ENCODE measurements at regions of chr16 and their contacts with region 1.

Region 1: GRCh38 chr16:4506450-4506849 is 30.3 kb downstream of the HMOX2 start:
- DNase-seq: peak; percentile 71
- H3K4me3 Mint-ChIP-seq: peak overlapping the region; percentile 52
- H3K27ac Mint-ChIP-seq: peak overlapping the region; percentile 93
- H3K4me1 Mint-ChIP-seq: peaks cover 58% of the 10 kb centered on the region
- H3K27me3 Mint-ChIP-seq: no peaks in the 10 kb centered on the region

Region 2: GRCh38 chr16:4416200-4417032 is 90.0 kb before region 1 on chr16 and contains the start of gene CORO7:
- CTCF ChIA-PET with region 1: interaction called, 3 read pairs
- POLR2A ChIA-PET with region 1: interaction called, 40 read pairs
- DNase-seq: peak; percentile 98
- H3K4me3 Mint-ChIP-seq: peak within 1 kb of the TSS; percentile 95
- H3K27ac Mint-ChIP-seq: peak within 1 kb of the TSS; percentile 99
- H3K4me1 Mint-ChIP-seq: peaks cover 47% of the 10 kb centered on the region
- H3K27me3 Mint-ChIP-seq: peaks cover 4% of the 10 kb centered on the region
- total RNA-seq, gene CORO7: 244 to 245 TPM

Region 3: DNA sequence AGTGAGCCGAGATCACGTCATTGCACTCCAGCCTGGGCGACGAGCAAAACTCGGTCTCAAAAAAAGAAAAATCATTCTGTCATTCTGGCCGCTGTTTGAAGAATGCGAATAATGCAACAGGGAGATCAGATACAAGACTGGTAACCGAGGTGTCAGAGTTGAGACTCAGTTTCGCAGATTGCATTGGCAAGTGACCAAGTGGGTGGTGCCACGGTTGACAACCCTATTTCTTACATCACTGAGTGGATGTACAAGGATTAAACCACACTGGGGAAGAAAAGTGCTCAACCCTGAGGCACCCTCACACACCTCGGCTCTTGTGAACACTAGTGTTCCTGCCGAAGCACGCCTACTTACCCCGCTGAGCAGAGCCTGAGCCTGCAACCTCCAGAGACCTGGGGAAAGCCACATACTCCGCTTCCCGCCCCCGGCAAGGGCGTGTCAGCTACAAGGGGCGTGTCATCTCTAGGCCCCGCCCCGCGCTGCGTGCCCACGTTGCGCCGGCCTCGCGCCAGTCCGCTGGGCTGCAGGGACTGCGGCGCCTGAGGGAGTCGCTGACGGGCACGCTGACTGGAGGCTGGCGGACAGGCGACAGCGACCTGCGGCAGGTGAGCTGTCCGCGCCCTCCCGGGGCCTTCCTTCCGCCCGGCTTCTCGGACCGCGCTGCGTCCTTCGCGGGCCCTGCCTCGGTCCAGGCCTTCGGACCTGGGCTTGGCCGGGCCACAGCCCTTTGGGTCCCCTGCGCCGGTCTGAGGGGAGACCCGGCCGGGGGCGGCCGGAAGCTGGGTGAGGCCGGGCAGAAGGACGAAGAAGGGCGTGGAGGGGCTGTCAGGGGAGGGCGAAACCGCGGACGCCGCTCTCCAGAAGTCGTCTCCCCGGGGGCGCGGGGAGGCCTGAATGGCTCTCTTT is 30.3 kb before region 1 on chr16 and contains the start of gene HMOX2:
- CTCF ChIA-PET with region 1: interaction called, 102 read pairs
- POLR2A ChIA-PET with region 1: interaction called, 154 read pairs
- DNase-seq: peak; percentile 96
- H3K4me3 Mint-ChIP-seq: peak within 1 kb of the TSS; percentile 91
- H3K27ac Mint-ChIP-seq: peak within 1 kb of the TSS; percentile 93
- H3K4me1 Mint-ChIP-seq: peaks cover 43% of the 10 kb centered on the region
- H3K27me3 Mint-ChIP-seq: no peaks in the 10 kb centered on the region
- total RNA-seq, gene HMOX2: 77.4 to 83.4 TPM

Region 4: DNA sequence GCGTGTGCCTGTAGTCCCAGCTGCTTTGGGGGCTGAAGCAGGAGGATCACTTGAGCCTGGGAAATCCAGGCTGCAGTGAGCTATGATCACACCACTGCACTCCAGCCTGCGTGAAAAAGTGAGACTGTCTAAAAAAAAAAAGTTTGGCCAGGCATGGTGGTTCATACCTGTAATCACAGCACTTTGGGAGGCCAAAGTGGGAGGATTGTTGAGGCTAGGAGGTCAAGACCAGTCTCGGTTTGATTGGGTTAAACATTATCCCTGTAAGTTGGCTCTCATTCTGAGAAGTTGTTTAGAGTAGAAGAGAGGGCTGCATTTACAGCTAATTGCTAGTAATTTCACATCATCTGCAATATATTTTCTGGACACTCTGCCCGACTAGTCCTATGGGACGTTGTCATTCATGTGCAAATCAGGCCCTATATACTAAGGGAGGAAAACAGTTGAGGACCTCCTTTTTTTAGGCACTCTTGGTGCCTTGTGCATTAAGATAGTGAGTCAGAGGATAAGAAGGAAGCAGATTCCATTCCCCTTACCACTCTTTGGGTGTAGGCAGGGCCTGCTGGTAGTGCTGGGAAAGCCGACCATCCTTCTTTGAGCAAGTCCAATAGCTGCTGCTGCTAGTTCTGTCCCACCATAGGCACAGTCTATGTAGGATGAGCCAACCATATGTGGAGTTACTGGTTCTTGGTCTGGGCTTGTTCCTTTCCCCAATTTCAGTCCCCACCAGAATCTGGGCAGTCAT is 11.5 kb before region 1 on chr16:
- CTCF ChIA-PET with region 1: interaction called, 19 read pairs
- POLR2A ChIA-PET with region 1: interaction called, 19 read pairs
- DNase-seq: no peak
- H3K4me3 Mint-ChIP-seq: no peak overlapping the region
- H3K27ac Mint-ChIP-seq: no peak overlapping the region
- H3K4me1 Mint-ChIP-seq: peaks cover 55% of the 10 kb centered on the region
- H3K27me3 Mint-ChIP-seq: no peaks in the 10 kb centered on the region

Region 5: GRCh38 chr16:4538350-4539235 is 32.1 kb after region 1 on chr16 and contains the start of gene CDIP1:
- CTCF ChIA-PET with region 1: interaction called, 11 read pairs
- POLR2A ChIA-PET with region 1: interaction called, 16 read pairs
- DNase-seq: peak; percentile 95
- H3K4me3 Mint-ChIP-seq: peak within 1 kb of the TSS; percentile 61
- H3K27ac Mint-ChIP-seq: peak within 1 kb of the TSS; percentile 59
- H3K4me1 Mint-ChIP-seq: peaks cover 34% of the 10 kb centered on the region
- H3K27me3 Mint-ChIP-seq: peaks cover 1% of the 10 kb centered on the region
- total RNA-seq, gene CDIP1: 28.7 to 30.7 TPM

Region 6: GRCh38 chr16:4550591-4550990 is 44.1 kb after region 1 on chr16:
- CTCF ChIA-PET with region 1: interaction called, 126 read pairs
- POLR2A ChIA-PET with region 1: interaction called, 16 read pairs
- DNase-seq: no peak
- H3K4me3 Mint-ChIP-seq: no peak overlapping the region
- H3K27ac Mint-ChIP-seq: no peak overlapping the region
- H3K4me1 Mint-ChIP-seq: peaks cover 4% of the 10 kb centered on the region
- H3K27me3 Mint-ChIP-seq: peaks cover 5% of the 10 kb centered on the region

Region 7: DNA sequence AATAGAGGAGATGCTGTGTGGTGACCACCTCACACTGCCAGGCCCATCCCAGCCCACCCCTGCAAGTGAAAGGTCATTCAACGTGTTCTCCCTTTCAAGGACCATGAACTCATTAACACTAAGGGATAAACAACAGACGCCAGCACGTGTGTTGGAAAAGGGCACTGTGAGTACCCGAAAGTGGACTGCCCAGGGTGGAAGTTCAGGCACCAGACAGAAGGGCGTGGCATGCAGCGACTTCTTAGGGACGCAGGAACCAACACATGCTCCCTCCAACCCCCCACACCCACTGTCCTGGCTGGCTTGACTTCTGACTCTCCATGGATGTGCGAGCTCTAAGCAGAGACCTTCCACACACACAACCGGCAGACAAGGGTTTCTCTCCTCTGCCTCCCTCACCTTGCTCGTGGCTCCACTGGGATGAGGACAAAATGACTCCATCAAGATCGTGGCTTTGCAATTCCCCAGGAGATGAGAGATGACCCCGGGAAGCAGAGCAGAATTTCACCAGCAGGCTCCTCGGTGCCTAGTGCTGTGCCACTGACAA is 97.2 kb after region 1 on chr16:
- CTCF ChIA-PET with region 1: no interaction called
- POLR2A ChIA-PET with region 1: no interaction called
- DNase-seq: no peak
- H3K4me3 Mint-ChIP-seq: no peak overlapping the region
- H3K27ac Mint-ChIP-seq: no peak overlapping the region
- H3K4me1 Mint-ChIP-seq: no peaks in the 10 kb centered on the region
- H3K27me3 Mint-ChIP-seq: peaks cover 3% of the 10 kb centered on the region

Region 8: DNA sequence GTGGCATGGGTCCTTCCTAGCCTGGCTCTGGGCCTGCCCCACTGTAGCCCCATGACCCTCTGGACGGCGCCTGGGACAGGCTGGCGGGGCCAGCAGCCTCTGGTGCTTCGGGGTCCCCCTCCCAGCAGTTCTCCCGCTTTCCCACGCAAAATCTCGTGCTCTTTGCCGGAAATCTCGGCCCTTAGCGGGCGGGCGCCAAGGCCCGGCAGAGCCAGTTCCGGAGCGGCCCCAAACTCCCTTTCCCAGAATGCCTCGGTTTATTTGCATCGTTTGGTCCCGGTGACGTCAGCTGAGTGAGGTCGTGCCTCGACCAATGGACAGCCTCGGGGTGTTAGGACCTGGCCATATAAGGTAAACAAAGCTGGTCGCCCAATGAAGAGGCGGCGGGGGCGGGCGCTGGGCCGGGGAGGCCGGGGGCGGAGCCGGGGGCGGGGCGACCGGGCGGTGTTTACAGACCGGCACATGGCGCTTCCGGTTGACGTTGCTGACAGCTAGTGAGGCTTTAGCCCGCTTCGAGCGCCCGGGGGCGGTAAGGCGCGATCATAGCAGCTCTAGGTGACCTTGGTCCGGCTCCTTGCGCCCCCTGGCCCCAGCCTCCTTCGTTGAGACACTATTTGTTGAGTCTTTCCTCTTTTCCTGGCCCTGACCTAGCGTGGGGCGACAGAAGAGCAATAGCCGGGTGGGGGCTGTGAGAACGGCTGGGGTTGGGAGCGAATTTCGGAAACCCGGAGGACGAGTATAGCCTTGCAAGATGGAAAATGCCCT is 109.8 kb after region 1 on chr16:
- CTCF ChIA-PET with region 1: interaction called, 23 read pairs
- POLR2A ChIA-PET with region 1: interaction called, 5 read pairs
- DNase-seq: peak; percentile 100
- H3K4me3 Mint-ChIP-seq: peak overlapping the region; percentile 94
- H3K27ac Mint-ChIP-seq: peak overlapping the region; percentile 97
- H3K4me1 Mint-ChIP-seq: peaks cover 33% of the 10 kb centered on the region
- H3K27me3 Mint-ChIP-seq: no peaks in the 10 kb centered on the region

Measured in activated CD4-positive, alpha-beta memory T cell treated with anti-CD3 and anti-CD28 coated beads, Interleukin-2, amount 10 ng/mL, durations not matched to agents 7 days and 5 days (primary cell).